Heart left ventricle (tissue), 16 donors: ENCODE measurements at regions of chr4 and their contacts with region 1.

Region 1: DNA sequence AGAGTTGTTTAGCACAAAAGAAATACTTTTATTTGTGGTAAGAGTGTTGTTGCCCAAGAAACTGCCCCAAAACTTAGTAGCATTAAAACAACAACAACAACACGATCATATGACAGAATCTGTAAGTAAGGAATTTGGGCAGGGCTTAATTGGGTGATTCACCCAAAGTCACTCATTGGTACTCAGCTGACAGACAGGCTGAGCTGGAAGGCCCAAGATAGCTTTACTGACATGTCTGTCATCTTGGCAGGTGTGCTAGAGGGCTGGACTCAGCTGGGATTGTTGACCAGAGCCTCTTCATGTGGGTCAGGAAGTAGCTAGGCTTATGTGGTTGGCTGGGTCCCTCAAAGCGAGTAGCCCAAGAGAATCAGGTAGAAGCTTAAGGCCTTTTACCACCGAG is 52.3 kb downstream of the KIAA0232 start:
- DNase-seq: no peak
- ATAC-seq: peak in 3 of 4 donors; percentile 62 to 75 (median 68)
- H3K4me3 ChIP-seq: no peak overlapping the region
- H3K27ac ChIP-seq: peak overlapping the region in 2 of 12 donors; percentile 30 to 32
- H3K4me1 ChIP-seq: peaks cover 0 to 21% (median 10%) of the 10 kb centered on the region in 12 donors
- H3K27me3 ChIP-seq: no peaks in the 10 kb centered on the region
- CTCF ChIP-seq: no peak
- POLR2A ChIP-seq: no peak

Region 2: GRCh38 chr4:6658597-6659075 is 176.2 kb before region 1 on chr4:
- intact Hi-C with region 1: loop called in 1 of 10 experiments (anchors 5 kb)
- DNase-seq: peak in 4 of 5 donors; percentile 36 to 79 (median 57)
- ATAC-seq: peak in 3 of 4 donors; percentile 75 to 82 (median 78)
- H3K4me3 ChIP-seq: peak overlapping the region; percentile 24 to 61 (median 47)
- H3K27ac ChIP-seq: peak overlapping the region in 11 of 12 donors; percentile 7 to 68 (median 48)
- H3K4me1 ChIP-seq: peaks cover 0 to 15% (median 2%) of the 10 kb centered on the region in 12 donors
- H3K27me3 ChIP-seq: peaks cover 0 to 41% (median 0%) of the 10 kb centered on the region in 9 donors
- CTCF ChIP-seq: no peak
- POLR2A ChIP-seq: no peak

Region 3: DNA sequence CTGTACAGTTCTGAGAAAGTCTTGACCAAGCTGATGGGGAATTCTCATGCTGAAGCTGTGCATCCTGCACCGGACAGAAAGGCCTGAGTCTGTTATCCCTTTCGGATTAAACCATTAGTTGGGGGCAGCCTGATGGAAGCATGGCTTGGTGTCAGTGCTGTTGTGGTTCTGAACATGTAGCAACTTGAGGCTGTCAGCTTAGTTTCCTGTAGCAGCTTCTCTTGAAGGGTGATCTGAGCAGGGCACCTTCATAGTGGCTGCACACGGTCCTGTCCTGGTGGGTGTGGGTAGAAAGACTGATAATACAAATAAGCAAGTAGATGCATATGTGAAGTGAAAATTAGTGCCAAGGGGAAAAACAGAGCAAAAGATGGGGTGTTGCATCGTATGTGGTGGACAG is 40.7 kb before region 1 on chr4:
- intact Hi-C with region 1: loop called in 2 of 10 experiments (anchors 5 to 10 kb)
- DNase-seq: no peak
- ATAC-seq: no peak
- H3K4me3 ChIP-seq: no peak overlapping the region
- H3K27ac ChIP-seq: no peak overlapping the region
- H3K4me1 ChIP-seq: peaks cover 0 to 84% (median 25%) of the 10 kb centered on the region in 12 donors
- H3K27me3 ChIP-seq: no peaks in the 10 kb centered on the region
- CTCF ChIP-seq: no peak
- POLR2A ChIP-seq: no peak

Region 4: DNA sequence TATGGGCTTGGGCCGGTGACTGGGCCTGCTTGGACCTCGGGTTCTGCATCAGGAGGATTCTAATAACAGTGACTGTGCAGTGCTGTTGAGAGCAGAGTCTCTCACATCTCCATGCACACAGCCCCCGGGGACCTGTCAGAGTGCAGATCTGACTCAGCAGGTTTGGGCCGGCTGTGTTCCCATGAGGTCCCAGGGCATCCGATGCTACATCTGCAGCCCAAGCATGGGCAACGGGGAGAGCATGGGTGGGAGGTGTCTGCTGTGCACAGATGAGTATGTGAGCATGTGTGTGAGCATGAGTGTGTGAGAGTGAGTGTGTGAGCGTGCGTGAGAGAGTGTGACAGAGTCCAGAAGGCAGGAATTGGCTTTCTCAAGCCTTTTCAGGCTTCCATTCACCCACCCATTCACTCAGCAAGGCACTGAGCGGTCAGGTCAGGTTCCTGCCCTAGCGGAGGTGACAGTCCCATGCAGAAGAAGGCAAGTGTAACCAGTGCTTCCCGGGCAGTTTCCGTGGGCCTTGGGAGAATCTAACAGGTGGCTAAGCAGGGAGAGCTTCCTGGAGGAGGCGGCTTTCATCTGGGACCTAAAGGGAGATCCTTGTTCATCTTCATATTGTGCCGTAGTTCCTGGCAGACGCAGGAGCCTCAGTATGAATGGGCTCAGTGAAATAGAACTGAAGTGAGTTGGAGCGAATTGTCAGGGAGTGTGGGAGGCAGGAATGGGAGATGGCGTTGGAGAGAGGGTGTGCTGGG is 420.0 kb after region 1 on chr4:
- intact Hi-C with region 1: no loop called
- DNase-seq: peak in 3 of 5 donors; percentile 53 to 73 (median 73)
- ATAC-seq: peak in 1 of 4 donors; percentile 8
- H3K4me3 ChIP-seq: no peak overlapping the region
- H3K27ac ChIP-seq: no peak overlapping the region
- H3K4me1 ChIP-seq: peaks cover 0 to 41% (median 12%) of the 10 kb centered on the region in 12 donors
- H3K27me3 ChIP-seq: no peaks in the 10 kb centered on the region
- CTCF ChIP-seq: no peak
- POLR2A ChIP-seq: no peak